Calu3 (cell line): ENCODE measurements at regions of chr15 and their contacts with region 1.

Region 1: GRCh38 chr15:89358755-89359439 is 24.3 kb upstream of the POLG start:
- DNase-seq: peak; percentile 87
- H3K4me3 Mint-ChIP-seq: peak overlapping the region; percentile 68
- H3K27ac Mint-ChIP-seq: no peak overlapping the region
- H3K4me1 Mint-ChIP-seq: peaks cover 8% of the 10 kb centered on the region
- H3K27me3 Mint-ChIP-seq: peaks cover 100% of the 10 kb centered on the region
- CTCF ChIP-seq: peak; percentile 98

Region 2: DNA sequence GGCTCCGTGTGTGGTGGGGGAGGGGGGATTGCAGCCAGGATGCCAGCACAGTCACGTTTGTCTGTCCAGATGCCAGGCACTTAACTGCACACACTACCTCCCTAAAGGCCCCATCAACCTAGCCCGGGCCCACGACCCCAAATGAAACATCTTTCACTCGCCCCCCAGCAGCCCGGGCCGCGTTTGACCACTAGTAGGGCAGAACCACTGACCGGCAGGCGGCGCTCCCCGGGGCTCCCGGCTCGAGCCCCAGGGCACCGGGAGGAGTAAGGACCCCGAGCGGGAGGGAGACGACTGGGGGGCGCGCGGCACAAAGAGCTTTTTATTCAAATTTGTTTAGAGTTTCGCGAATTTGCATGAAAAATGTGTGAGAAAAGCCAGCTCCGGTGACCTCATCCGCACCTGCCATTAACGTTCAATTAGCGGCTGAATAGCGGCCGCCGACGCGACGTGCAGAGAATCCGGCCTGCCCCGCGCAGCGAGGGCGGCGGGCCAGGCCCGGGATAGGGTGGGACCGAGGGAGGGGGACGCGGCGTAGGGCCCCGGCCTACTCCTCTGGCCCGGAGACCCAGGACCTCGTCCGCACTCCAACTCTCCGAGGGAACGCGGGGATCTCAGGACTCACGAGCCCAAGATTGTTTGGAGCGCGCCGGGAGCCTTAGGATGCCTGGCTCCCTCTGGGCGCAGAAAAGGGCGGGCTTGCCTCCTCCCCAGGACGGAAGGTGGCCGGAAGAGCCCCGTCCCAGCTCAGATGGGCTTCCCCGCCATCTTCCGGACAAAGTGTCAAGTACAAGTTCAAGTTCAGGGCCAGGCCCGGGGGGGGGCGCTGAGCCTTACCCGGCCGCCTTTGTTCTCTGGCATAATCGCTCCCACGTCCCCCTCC is 40.6 kb after region 1 on chr15:
- CTCF ChIA-PET with region 1: interaction called, 8 read pairs
- intact Hi-C with region 1: loop called (anchors 5 kb)
- DNase-seq: peak; percentile 62
- H3K4me3 Mint-ChIP-seq: peak overlapping the region; percentile 60
- H3K27ac Mint-ChIP-seq: no peak overlapping the region
- H3K4me1 Mint-ChIP-seq: no peaks in the 10 kb centered on the region
- H3K27me3 Mint-ChIP-seq: peaks cover 97% of the 10 kb centered on the region
- CTCF ChIP-seq: peak; percentile 66

Region 3: DNA sequence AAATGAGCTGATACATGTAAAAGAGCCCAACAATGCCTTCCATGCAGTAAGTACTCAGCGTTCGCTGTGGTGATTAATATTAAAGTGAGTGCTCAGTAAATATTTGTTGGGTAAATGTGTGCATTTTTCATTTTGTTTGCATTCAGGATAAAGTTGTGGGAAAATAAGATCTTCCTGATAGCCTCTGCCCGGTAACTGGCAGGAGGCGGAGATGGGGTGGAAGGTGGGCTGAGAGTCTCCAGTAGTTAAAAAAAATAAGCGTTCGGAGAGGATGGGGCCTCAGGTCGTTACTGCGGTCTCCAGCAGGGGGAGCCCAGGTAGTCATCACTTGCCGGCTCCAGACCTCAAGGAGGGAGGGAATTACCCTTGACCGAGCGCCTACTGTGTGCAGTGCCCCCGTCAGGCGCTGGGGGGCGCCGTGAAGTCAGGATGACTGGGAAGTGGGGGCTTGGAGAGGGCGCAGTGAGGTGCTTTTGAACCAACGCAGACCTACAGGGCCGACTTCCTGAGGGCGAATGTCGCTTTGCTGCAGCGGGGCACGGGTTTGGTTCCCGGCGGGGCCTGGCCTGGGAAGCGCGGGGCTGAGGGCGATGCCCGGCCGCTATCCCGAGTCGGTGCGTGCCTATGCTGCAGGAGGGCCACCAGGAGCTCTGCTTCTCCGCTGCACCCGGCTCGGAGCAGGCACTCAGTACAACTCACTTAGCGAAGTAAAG is 57.4 kb after region 1 on chr15:
- CTCF ChIA-PET with region 1: interaction called, 10 read pairs
- intact Hi-C with region 1: no loop called
- DNase-seq: peak; percentile 91
- H3K4me3 Mint-ChIP-seq: no peak overlapping the region
- H3K27ac Mint-ChIP-seq: no peak overlapping the region
- H3K4me1 Mint-ChIP-seq: no peaks in the 10 kb centered on the region
- H3K27me3 Mint-ChIP-seq: peaks cover 100% of the 10 kb centered on the region
- CTCF ChIP-seq: peak; percentile 98

Region 4: GRCh38 chr15:89430530-89431341 is 71.8 kb after region 1 on chr15:
- CTCF ChIA-PET with region 1: interaction called, 54 read pairs
- intact Hi-C with region 1: loop called (anchors 1 kb)
- DNase-seq: peak; percentile 97
- H3K4me3 Mint-ChIP-seq: peak overlapping the region; percentile 73
- H3K27ac Mint-ChIP-seq: peak overlapping the region; percentile 89
- H3K4me1 Mint-ChIP-seq: peaks cover 25% of the 10 kb centered on the region
- H3K27me3 Mint-ChIP-seq: peaks cover 38% of the 10 kb centered on the region
- CTCF ChIP-seq: peak; percentile 99

Region 5: GRCh38 chr15:89442671-89443307 is 83.9 kb after region 1 on chr15:
- CTCF ChIA-PET with region 1: interaction called, 14 read pairs
- intact Hi-C with region 1: no loop called
- DNase-seq: peak; percentile 74
- H3K4me3 Mint-ChIP-seq: no peak overlapping the region
- H3K27ac Mint-ChIP-seq: no peak overlapping the region
- H3K4me1 Mint-ChIP-seq: no peaks in the 10 kb centered on the region
- H3K27me3 Mint-ChIP-seq: peaks cover 87% of the 10 kb centered on the region
- CTCF ChIP-seq: peak; percentile 53

Region 6: DNA sequence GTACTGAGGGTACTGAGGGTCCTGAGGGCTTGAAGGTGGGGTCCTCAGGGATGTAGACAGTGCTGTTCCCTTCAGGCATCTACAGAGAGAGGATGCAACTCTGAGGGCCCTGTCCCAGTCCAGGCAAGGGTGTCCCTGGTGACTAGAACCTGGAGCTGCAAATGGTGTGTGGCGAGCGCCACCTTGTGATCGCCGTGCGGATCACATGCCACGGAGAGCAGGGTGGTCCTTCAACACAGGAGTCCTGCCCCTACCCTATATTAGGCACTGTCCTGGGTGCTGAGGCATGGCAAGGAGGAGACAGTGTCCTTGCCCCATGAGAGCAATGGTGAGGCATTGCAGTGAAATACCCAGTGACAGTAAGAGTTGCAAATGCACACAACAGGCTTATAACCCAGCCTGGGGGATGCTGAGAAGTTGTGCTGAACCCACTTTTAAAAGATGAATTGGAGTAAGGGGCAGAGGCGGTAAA is 113.9 kb after region 1 on chr15:
- CTCF ChIA-PET with region 1: interaction called, 50 read pairs
- intact Hi-C with region 1: loop called (anchors 1 kb)
- DNase-seq: peak; percentile 83
- H3K4me3 Mint-ChIP-seq: no peak overlapping the region
- H3K27ac Mint-ChIP-seq: no peak overlapping the region
- H3K4me1 Mint-ChIP-seq: no peaks in the 10 kb centered on the region
- H3K27me3 Mint-ChIP-seq: peaks cover 92% of the 10 kb centered on the region
- CTCF ChIP-seq: peak; percentile 91

Region 7: GRCh38 chr15:89556413-89557262 is 197.7 kb after region 1 on chr15:
- CTCF ChIA-PET with region 1: no interaction called
- intact Hi-C with region 1: loop called (anchors 5 kb)
- DNase-seq: peak; percentile 74
- H3K4me3 Mint-ChIP-seq: no peak overlapping the region
- H3K27ac Mint-ChIP-seq: no peak overlapping the region
- H3K4me1 Mint-ChIP-seq: peaks cover 4% of the 10 kb centered on the region
- H3K27me3 Mint-ChIP-seq: peaks cover 10% of the 10 kb centered on the region
- CTCF ChIP-seq: peak; percentile 61